Activated T-helper 1 cell treated with anti-CD3 and anti-CD28 coated beads, Interleukin-12 subunit alpha, Interleukin-12 subunit beta, Interleukin-2, Interleukin-4 antibody, amounts not matched to agents 30 ng/mL and 10 ng/mL and 1 ng/mL, durations not matched to agents 14 hours and 24 hours and 36 hours (primary cell): ENCODE measurements at regions of chr3 and their contacts with region 1.

Region 1: GRCh38 chr3:60081381-60082095 is 1031.7 kb upstream of the CFAP20DC start:
- DNase-seq: no peak
- H3K4me3 Mint-ChIP-seq: peak overlapping the region; percentile 79
- H3K27ac Mint-ChIP-seq: peak overlapping the region; percentile 95
- H3K4me1 Mint-ChIP-seq: peaks cover 87% of the 10 kb centered on the region
- H3K27me3 Mint-ChIP-seq: no peaks in the 10 kb centered on the region

Region 2: GRCh38 chr3:59575113-59576001 is 506.2 kb before region 1 on chr3:
- intact Hi-C with region 1: loop called (anchors 5 kb)
- DNase-seq: peak; percentile 72
- H3K4me3 Mint-ChIP-seq: no peak overlapping the region
- H3K27ac Mint-ChIP-seq: peak overlapping the region; percentile 15
- H3K4me1 Mint-ChIP-seq: peaks cover 10% of the 10 kb centered on the region
- H3K27me3 Mint-ChIP-seq: no peaks in the 10 kb centered on the region

Region 3: DNA sequence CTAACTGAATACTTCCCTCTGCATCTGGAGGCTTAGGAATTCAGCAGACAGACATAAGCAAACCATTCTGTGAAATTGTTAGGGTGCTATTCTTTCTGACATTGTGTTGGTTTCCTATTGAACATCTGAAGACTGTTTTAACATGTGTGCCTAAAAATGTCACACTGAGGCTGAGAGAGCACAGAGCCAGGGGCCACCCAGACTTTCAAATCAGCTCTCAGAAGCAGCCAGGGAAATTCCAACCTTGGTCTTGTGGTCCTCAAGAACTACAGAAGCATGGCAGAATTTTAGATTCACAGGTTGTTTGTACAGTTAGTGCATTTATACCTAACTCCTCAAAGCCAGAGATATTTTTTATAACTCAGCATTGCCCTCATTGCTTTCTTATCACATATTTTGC is 102.6 kb before region 1 on chr3:
- intact Hi-C with region 1: loop called (anchors 1 kb)
- DNase-seq: peak; percentile 38
- H3K4me3 Mint-ChIP-seq: peak overlapping the region; percentile 64
- H3K27ac Mint-ChIP-seq: peak overlapping the region; percentile 93
- H3K4me1 Mint-ChIP-seq: peaks cover 45% of the 10 kb centered on the region
- H3K27me3 Mint-ChIP-seq: no peaks in the 10 kb centered on the region

Region 4: DNA sequence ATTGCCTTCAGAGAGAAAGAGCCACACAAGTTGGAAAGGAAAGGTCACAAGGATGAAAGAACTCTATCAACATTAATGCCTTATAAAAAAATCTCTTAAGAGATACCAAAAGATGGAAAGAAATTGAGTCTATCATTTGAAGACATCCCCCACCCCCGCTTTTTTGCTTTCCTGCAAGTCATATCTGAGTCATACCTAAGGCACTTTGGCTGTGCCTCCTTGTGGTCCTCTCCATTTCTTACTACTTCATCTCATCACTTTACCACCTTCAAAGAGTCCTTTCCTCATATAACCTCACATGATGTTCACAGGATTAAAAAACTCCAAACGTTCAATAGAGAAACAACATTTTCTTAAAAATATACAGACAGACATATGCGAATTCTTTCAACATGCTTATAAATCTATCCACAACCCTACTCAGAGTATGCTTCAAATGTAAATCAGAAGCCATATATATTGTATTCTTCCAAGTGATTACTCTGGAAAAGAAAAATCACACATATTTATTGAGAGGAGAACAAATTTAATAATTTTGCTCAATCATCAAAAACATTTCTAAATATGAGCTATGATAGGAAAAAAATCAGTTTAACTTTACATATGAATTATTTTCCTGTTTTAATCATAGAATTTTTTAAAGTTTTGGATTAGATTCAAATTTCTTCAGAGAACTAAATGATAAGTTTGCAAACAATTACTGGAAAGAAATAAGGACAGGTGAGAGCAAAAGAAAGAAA is 27.8 kb before region 1 on chr3:
- intact Hi-C with region 1: loop called (anchors 1 kb)
- DNase-seq: no peak
- H3K4me3 Mint-ChIP-seq: peak overlapping the region; percentile 21
- H3K27ac Mint-ChIP-seq: peak overlapping the region; percentile 75
- H3K4me1 Mint-ChIP-seq: peaks cover 86% of the 10 kb centered on the region
- H3K27me3 Mint-ChIP-seq: no peaks in the 10 kb centered on the region

Region 5: GRCh38 chr3:60142009-60142408 is 60.5 kb after region 1 on chr3:
- intact Hi-C with region 1: no loop called
- DNase-seq: no peak
- H3K4me3 Mint-ChIP-seq: no peak overlapping the region
- H3K27ac Mint-ChIP-seq: no peak overlapping the region
- H3K4me1 Mint-ChIP-seq: peaks cover 2% of the 10 kb centered on the region
- H3K27me3 Mint-ChIP-seq: no peaks in the 10 kb centered on the region

Region 6: GRCh38 chr3:60240492-60240891 is 159.0 kb after region 1 on chr3:
- intact Hi-C with region 1: no loop called
- DNase-seq: no peak
- H3K4me3 Mint-ChIP-seq: no peak overlapping the region
- H3K27ac Mint-ChIP-seq: no peak overlapping the region
- H3K4me1 Mint-ChIP-seq: no peaks in the 10 kb centered on the region
- H3K27me3 Mint-ChIP-seq: no peaks in the 10 kb centered on the region

Region 7: GRCh38 chr3:60365360-60365759 is 283.8 kb after region 1 on chr3:
- intact Hi-C with region 1: loop called (anchors 1 kb)
- DNase-seq: no peak
- H3K4me3 Mint-ChIP-seq: no peak overlapping the region
- H3K27ac Mint-ChIP-seq: peak overlapping the region; percentile 46
- H3K4me1 Mint-ChIP-seq: peaks cover 27% of the 10 kb centered on the region
- H3K27me3 Mint-ChIP-seq: no peaks in the 10 kb centered on the region